ENCODE measurements at regions of chr4 and their contacts with region 1.

Region 1: GRCh38 chr4:108466936-108467902 is 153.2 kb upstream of the RPL34 start:
- DNase-seq: peak; percentile 41
- ATAC-seq: peak; percentile 90
- H3K4me3 Mint-ChIP-seq: peak overlapping the region; percentile 33
- H3K27ac Mint-ChIP-seq: peak overlapping the region; percentile 78
- H3K4me1 Mint-ChIP-seq: peaks cover 33% of the 10 kb centered on the region
- H3K27me3 Mint-ChIP-seq: no peaks in the 10 kb centered on the region

Region 2: GRCh38 chr4:108433832-108434231 is 33.4 kb before region 1 on chr4:
- CTCF ChIA-PET with region 1: interaction called, 3 read pairs
- POLR2A ChIA-PET with region 1: no interaction called
- intact Hi-C with region 1: loop called in 1 of 2 experiments (anchors 5 kb)
- DNase-seq: peak; percentile 47
- ATAC-seq: peak; percentile 79
- H3K4me3 Mint-ChIP-seq: peak overlapping the region; percentile 3
- H3K27ac Mint-ChIP-seq: peak overlapping the region; percentile 77
- H3K4me1 Mint-ChIP-seq: peaks cover 46% of the 10 kb centered on the region
- H3K27me3 Mint-ChIP-seq: no peaks in the 10 kb centered on the region